Caco-2 (cell line): ENCODE measurements at regions of chr1 and their contacts with region 1.

Region 1: DNA sequence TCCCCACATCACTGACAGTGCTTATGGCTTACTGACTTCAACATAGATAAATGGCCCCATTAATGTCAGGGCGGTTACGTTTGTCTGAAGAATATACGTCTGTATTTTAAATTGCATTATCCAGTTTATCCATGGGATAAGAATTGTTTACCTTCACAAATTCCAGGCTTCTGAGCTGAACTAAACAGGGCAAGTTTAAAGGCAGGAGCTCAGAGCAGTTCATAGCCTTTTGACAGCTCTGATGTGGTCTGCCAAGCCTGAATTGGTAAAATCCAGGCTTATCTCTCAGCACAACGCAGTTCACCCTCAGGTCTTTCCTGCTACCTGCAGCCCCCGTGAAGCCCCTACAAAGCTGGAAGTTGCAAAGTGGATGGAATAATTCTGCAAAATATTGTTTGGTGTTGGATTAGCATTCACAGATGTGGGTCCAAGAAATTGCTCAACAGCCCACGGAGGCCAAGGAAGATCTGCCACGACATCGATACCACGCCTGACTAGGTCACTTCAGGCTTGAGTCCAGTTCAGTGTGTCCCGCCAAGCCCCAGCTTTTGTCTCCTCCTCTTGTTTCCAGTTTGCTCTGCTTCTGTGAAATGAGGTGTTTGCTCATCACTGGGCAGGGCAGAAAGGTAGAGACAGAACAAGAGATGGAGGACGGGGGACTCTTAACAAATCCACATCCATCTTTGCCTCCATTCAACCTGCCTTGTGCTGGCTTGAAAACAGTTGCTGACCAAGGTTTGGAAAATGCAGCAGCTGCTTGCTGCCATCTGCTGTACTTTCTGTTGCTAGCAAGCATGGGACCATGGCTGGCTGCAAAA is 79.8 kb upstream of the GREM2 start:
- DNase-seq: peak; percentile 48 to 60
- H3K4me3 ChIP-seq: no peak overlapping the region
- H3K4me3 Mint-ChIP-seq: peak overlapping the region; percentile 39
- H3K27ac Mint-ChIP-seq: no peak overlapping the region
- H3K4me1 ChIP-seq: 0 out of 2 replicates have a peak, but pooled peaks cover 4% of the 10 kb centered on the region
- H3K4me1 Mint-ChIP-seq: peaks cover 7% of the 10 kb centered on the region
- H3K27me3 ChIP-seq: no peaks in the 10 kb centered on the region
- H3K27me3 Mint-ChIP-seq: no peaks in the 10 kb centered on the region
- CTCF ChIP-seq: peak; percentile 65 to 82

Region 2: GRCh38 chr1:240027059-240027462 is 664.7 kb before region 1 on chr1:
- CTCF ChIA-PET with region 1: no interaction called
- POLR2A ChIA-PET with region 1: no interaction called
- intact Hi-C with region 1: loop called (anchors 1 kb)
- DNase-seq: peak in 1 of 2 experiments; percentile 49
- H3K4me3 ChIP-seq: no peak overlapping the region
- H3K4me3 Mint-ChIP-seq: no peak overlapping the region
- H3K27ac Mint-ChIP-seq: no peak overlapping the region
- H3K4me1 ChIP-seq: no peaks in the 10 kb centered on the region
- H3K4me1 Mint-ChIP-seq: no peaks in the 10 kb centered on the region
- H3K27me3 ChIP-seq: no peaks in the 10 kb centered on the region
- H3K27me3 Mint-ChIP-seq: peaks cover 8% of the 10 kb centered on the region
- CTCF ChIP-seq: peak; percentile 74 to 83

Region 3: DNA sequence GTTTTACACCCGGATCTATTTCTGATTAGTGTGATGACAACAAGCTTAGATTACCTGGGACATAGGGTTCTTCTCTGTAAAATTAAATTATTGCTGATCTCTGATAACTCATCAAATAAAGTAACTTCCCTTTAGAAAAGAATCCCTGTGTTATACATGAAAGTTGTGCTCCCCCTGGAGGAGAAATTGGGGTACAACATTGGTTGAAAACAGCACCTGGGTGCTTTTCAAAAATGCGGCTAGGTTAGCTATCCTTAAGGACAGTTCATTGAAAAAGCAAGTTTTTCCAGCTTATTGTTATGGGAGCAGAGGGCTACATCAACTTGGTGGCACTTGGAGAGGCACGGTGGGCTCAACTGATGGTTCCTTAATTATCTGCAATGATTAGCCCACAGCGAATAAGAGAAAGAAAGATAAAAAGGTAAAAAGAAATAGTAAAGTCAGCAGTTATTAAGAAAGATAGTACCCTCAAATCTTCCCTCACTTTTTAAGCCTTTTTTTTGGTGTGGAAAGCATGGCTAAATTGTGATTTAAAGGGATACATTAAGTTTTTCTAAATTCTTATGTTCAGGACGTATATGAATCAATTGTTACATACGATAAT is 502.2 kb before region 1 on chr1:
- CTCF ChIA-PET with region 1: interaction called, 3 read pairs
- POLR2A ChIA-PET with region 1: no interaction called
- intact Hi-C with region 1: loop called (anchors 1 kb)
- DNase-seq: peak; percentile 35 to 45
- H3K4me3 ChIP-seq: no peak overlapping the region
- H3K4me3 Mint-ChIP-seq: no peak overlapping the region
- H3K27ac Mint-ChIP-seq: no peak overlapping the region
- H3K4me1 ChIP-seq: 0 out of 2 replicates have a peak, but pooled peaks cover 8% of the 10 kb centered on the region
- H3K4me1 Mint-ChIP-seq: peaks cover 5% of the 10 kb centered on the region
- H3K27me3 ChIP-seq: no peaks in the 10 kb centered on the region
- H3K27me3 Mint-ChIP-seq: peaks cover 11% of the 10 kb centered on the region
- CTCF ChIP-seq: peak; percentile 75 to 81

Region 4: DNA sequence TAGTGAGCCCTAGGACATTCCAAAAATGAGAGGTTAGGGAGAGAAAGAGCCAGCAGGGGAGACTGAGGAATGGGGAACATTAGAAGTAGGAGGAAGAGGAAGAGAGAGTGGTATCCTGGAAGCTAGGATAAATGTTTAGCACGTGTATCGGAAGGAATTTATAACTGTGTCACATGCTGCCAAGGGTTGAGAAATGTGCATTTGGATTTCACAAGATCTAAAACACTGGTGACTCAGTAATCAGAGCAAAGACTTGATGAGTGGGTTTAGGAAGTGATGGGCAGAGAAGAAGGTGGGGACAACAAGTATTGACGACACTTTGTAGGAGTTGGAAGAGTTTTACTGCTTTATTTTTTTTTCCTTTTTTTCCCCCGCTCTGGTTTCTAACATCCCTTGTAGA is 406.2 kb before region 1 on chr1:
- CTCF ChIA-PET with region 1: no interaction called
- POLR2A ChIA-PET with region 1: no interaction called
- intact Hi-C with region 1: loop called (anchors 10 kb)
- DNase-seq: no peak
- H3K4me3 ChIP-seq: no peak overlapping the region
- H3K4me3 Mint-ChIP-seq: no peak overlapping the region
- H3K27ac Mint-ChIP-seq: no peak overlapping the region
- H3K4me1 ChIP-seq: peaks cover 6% of the 10 kb centered on the region; the same call in 1 of the 2 replicates
- H3K4me1 Mint-ChIP-seq: no peaks in the 10 kb centered on the region
- H3K27me3 ChIP-seq: no peaks in the 10 kb centered on the region
- H3K27me3 Mint-ChIP-seq: peaks cover 6% of the 10 kb centered on the region
- CTCF ChIP-seq: no peak

Region 5: DNA sequence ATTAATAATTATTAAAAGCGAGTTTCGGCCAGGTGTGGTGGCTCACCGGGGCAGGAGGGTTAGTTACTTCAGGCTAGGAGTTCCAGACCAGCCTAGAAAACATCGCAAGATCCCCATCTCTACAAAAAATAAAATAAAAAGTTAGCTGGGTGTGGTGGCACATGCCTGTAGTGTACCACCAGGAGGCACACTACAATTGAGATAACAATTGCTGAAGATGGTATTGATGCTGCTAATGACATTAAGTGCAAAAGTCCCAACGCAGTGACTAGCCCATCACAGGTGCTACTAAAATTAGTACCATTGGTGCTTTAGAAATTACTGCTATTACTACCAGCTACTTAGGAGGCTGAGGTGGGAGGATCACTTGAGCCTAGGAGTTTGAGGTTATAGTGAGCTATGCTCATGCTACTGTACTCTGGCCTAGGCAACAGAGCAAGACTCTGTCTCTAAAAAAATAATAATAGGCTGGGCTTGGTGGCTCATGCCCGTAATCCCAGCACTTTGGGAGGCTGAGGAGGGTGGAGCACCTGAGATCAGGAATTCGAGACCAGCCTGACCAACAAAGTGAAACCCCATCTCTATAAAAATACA is 236.4 kb before region 1 on chr1:
- CTCF ChIA-PET with region 1: no interaction called
- POLR2A ChIA-PET with region 1: no interaction called
- intact Hi-C with region 1: loop called (anchors 1 kb)
- DNase-seq: peak in 1 of 2 experiments; percentile 29
- H3K4me3 ChIP-seq: no peak overlapping the region
- H3K4me3 Mint-ChIP-seq: no peak overlapping the region
- H3K27ac Mint-ChIP-seq: no peak overlapping the region
- H3K4me1 ChIP-seq: peaks cover 7% of the 10 kb centered on the region; the same call in 1 of the 2 replicates
- H3K4me1 Mint-ChIP-seq: no peaks in the 10 kb centered on the region
- H3K27me3 ChIP-seq: no peaks in the 10 kb centered on the region
- H3K27me3 Mint-ChIP-seq: no peaks in the 10 kb centered on the region
- CTCF ChIP-seq: peak; percentile 27 to 43

Region 6: GRCh38 chr1:240611619-240612480 is 79.9 kb before region 1 on chr1 and contains the start of gene GREM2:
- CTCF ChIA-PET with region 1: interaction called, 5 read pairs
- POLR2A ChIA-PET with region 1: no interaction called
- intact Hi-C with region 1: loop called (anchors 1 kb)
- DNase-seq: peak; percentile 36 to 51
- H3K4me3 ChIP-seq: peak within 1 kb of the TSS; percentile 40
- H3K4me3 Mint-ChIP-seq: peak within 1 kb of the TSS; percentile 84
- H3K27ac Mint-ChIP-seq: peak within 1 kb of the TSS; percentile 40
- H3K4me1 ChIP-seq: peaks cover 11% of the 10 kb centered on the region; the same call in 1 of the 2 replicates
- H3K4me1 Mint-ChIP-seq: peaks cover 14% of the 10 kb centered on the region
- H3K27me3 ChIP-seq: no peaks in the 10 kb centered on the region; the same call in 1 of the 2 replicates
- H3K27me3 Mint-ChIP-seq: peaks cover 3% of the 10 kb centered on the region
- CTCF ChIP-seq: no peak
- total RNA-seq, gene GREM2: 0.36 and 0.51 TPM in 2 replicates

Region 7: DNA sequence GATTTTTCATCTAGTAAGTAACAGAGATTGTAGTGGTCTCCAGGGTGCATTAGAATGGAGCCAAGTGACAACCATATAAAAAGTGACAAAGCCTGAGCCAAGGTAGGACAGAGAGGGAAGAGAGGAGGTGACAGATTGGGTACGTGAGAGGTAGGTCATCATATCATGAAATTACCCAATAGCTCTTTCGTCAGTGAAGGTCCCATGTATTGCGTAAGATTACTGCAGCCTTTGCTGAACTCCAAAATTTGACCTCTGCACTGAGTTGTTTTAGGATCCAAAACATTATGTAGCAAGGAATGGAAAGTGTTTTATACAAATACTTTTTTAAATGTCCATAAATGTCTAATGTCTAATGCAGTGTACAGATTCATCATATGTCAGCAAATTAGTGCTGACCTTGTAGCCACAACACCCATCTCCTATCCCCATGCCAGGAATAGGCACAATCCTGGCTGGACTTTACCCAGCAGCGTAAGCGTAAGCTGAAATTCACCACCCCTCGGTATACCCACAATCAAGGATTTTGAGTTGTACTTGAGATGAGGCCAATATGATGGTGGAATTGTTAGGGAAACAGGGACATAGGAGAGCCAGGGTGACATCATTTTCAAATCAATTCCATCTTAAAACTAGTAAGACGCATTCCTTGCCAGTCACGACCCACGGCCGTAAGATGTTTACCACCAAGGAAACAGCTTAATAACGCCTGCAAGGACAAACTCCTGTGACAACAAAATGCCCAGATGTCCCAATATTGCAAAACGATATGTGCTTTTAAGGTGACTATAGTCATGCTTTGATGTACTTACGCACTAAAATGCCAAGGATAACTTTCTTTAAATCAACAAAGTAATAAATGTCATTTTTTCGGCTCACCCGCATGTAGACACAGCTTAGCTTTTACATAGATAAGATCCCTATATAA is 41.7 kb before region 1 on chr1:
- CTCF ChIA-PET with region 1: no interaction called
- POLR2A ChIA-PET with region 1: no interaction called
- intact Hi-C with region 1: loop called (anchors 1 kb)
- DNase-seq: peak; percentile 38 to 42
- H3K4me3 ChIP-seq: no peak overlapping the region
- H3K4me3 Mint-ChIP-seq: peak overlapping the region; percentile 49
- H3K27ac Mint-ChIP-seq: peak overlapping the region; percentile 48
- H3K4me1 ChIP-seq: peaks cover 21% of the 10 kb centered on the region
- H3K4me1 Mint-ChIP-seq: peaks cover 25% of the 10 kb centered on the region
- H3K27me3 ChIP-seq: no peaks in the 10 kb centered on the region
- H3K27me3 Mint-ChIP-seq: no peaks in the 10 kb centered on the region
- CTCF ChIP-seq: no peak